SK-N-SH (cell line): ENCODE measurements at regions of chr6 and their contacts with region 1.

Region 1: DNA sequence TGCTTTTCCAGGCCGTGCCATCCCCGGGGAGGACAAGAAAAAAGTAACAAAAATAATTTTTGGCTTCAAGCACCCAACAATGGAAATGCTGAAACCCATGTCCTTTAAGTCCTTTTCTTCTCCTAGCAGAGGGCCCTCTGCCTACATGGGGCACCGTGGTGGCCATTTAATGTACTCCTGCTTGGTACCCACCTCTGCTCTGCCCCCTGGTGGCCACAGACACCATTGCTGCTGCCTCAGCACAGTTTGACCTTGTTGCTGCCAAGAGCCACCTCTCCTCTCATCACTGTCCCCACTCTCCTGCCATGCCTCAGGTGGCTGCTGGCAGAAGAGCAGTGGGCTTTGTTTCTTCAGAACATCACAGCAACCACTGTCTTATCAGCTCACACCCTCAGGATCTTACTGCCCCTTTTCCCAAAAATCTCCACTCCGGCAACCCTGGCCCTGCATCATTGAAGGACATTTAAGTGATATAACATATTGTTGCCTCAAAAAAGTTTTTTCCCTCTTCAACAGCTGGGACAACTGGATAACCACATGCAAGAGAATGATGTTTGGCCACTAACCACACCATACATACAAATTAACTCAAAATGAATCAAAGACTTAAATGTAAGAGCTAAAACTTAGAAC is 12.9 kb upstream of the ARMC2 start:
- DNase-seq: peak; percentile 89
- H3K4me3 ChIP-seq: no peak overlapping the region; a peak in 1 of 4 replicates
- H3K27ac ChIP-seq: peak overlapping the region in 1 of 2 experiments; percentile 62; a peak in 2 of 4 replicates
- H3K4me1 ChIP-seq: peaks cover 0 to 13% of the 10 kb centered on the region in 2 experiments; a peak in 2 of 4 replicates
- H3K27me3 ChIP-seq: no peaks in the 10 kb centered on the region
- CTCF ChIP-seq: peak; percentile 93
- EP300 ChIP-seq: no peak
- RAD21 ChIP-seq: peak; percentile 91

Region 2: GRCh38 chr6:108145639-108146038 is 689.7 kb before region 1 on chr6:
- CTCF ChIA-PET with region 1: no interaction called
- POLR2A ChIA-PET with region 1: no interaction called
- DNase-seq: no peak
- H3K4me3 ChIP-seq: no peak overlapping the region
- H3K27ac ChIP-seq: no peak overlapping the region
- H3K4me1 ChIP-seq: no peaks in the 10 kb centered on the region
- H3K27me3 ChIP-seq: no peaks in the 10 kb centered on the region; the same call in 1 of the 2 replicates
- CTCF ChIP-seq: no peak
- EP300 ChIP-seq: no peak
- RAD21 ChIP-seq: peak; percentile 22; the same call in 1 of the 2 replicates

Region 3: GRCh38 chr6:108848116-108848868 is 13.0 kb after region 1 on chr6 and contains the start of gene ARMC2:
- CTCF ChIA-PET with region 1: interaction called, 16 read pairs
- POLR2A ChIA-PET with region 1: no interaction called
- DNase-seq: peak; percentile 98
- H3K4me3 ChIP-seq: peak within 1 kb of the TSS; percentile 89 to 92
- H3K27ac ChIP-seq: peak within 1 kb of the TSS; percentile 77 to 87
- H3K4me1 ChIP-seq: peaks cover 0 to 7% of the 10 kb centered on the region in 2 experiments; a peak in 3 of 4 replicates
- H3K27me3 ChIP-seq: no peaks in the 10 kb centered on the region
- CTCF ChIP-seq: no peak
- EP300 ChIP-seq: no peak
- RAD21 ChIP-seq: no peak
- polyA plus RNA-seq, gene ARMC2: 2.4 and 4.3 TPM in 2 replicates